Transverse colon (tissue), 4 donors: ENCODE measurements at regions of chr7 and their contacts with region 1.

Region 1: DNA sequence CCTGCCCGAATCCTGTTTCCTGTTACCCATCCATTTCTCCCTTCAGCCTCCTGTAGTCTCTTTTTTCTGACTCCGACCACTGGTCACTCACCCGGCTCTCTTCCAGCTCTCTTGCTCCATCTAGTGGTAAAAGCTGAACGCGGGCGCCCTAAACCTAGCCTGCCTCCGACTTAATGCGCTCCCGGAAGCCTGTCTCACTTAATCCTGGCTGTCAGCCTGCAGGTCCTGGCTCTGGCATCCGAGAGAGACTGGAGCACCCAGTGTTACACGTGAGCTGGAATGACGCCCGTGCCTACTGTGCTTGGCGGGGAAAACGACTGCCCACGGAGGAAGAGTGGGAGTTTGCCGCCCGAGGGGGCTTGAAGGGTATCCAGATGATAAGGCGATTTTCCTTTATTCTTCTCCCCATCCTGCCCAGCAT is 10.3 kb downstream of the SUMF2 start:
- DNase-seq: peak; percentile 89
- H3K4me3 ChIP-seq: no peak overlapping the region
- H3K27ac ChIP-seq: peak overlapping the region in 2 of 4 donors; percentile 45 to 50
- H3K4me1 ChIP-seq: peaks cover 0 to 16% (median 4%) of the 10 kb centered on the region in 4 donors
- H3K27me3 ChIP-seq: no peaks in the 10 kb centered on the region
- CTCF ChIP-seq: peak; percentile 86 to 92 (median 92)
- EP300 ChIP-seq: no peak
- POLR2A ChIP-seq: no peak

Region 2: DNA sequence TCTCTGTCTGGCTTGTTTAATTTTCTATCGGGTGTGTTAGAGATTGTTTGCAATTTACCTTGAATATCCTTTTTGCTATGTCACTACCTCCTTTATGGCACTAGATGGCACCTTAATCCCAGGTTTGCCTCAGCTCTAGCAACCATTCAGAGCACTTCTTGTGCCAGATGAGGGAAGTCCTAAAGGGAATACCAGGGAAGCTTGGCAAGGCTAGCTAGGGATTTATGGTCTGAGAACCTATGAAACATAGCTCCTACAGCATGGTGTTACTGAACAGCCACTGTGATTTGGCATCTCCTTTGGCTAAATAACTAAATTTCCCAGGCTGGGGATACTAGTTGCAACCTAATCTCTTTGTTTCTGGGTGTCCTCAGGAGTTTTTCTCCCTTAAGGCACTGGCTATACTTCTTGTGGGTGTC is 433.1 kb before region 1 on chr7:
- in situ Hi-C with region 1: loop called in 1 of 4 experiments (anchors 10 kb)
- intact Hi-C with region 1: no loop called
- DNase-seq: peak; percentile 33
- H3K4me3 ChIP-seq: no peak overlapping the region
- H3K27ac ChIP-seq: no peak overlapping the region
- H3K4me1 ChIP-seq: peaks cover 0 to 5% (median 0%) of the 10 kb centered on the region in 4 donors
- H3K27me3 ChIP-seq: no peaks in the 10 kb centered on the region
- CTCF ChIP-seq: peak; percentile 70 to 85 (median 74)
- EP300 ChIP-seq: no peak
- POLR2A ChIP-seq: no peak

Region 3: DNA sequence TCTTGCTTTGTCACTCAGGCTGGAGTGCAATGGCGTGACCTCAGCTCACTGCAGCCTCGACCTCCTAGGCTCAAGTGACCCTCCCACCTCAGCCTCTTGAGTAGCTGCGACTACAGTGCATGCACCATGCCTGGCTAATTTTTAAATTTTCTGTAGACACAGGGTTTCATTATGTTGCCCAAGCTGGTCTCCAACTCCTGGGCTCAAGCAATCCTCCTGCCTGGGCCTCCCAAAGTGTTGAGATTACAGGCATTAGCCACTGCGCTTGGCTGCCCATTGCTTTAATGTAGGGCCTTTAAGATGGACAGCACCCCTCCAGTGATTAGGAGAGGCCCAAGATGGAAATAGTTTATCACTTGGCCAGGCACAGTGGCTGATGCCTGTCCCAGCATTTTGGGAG is 70.6 kb before region 1 on chr7:
- in situ Hi-C with region 1: loop called (anchors 5 to 10 kb)
- intact Hi-C with region 1: loop called (anchors 1 kb)
- DNase-seq: no peak
- H3K4me3 ChIP-seq: no peak overlapping the region
- H3K27ac ChIP-seq: no peak overlapping the region
- H3K4me1 ChIP-seq: no peaks in the 10 kb centered on the region
- H3K27me3 ChIP-seq: no peaks in the 10 kb centered on the region
- CTCF ChIP-seq: no peak
- EP300 ChIP-seq: no peak
- POLR2A ChIP-seq: no peak

Region 4: DNA sequence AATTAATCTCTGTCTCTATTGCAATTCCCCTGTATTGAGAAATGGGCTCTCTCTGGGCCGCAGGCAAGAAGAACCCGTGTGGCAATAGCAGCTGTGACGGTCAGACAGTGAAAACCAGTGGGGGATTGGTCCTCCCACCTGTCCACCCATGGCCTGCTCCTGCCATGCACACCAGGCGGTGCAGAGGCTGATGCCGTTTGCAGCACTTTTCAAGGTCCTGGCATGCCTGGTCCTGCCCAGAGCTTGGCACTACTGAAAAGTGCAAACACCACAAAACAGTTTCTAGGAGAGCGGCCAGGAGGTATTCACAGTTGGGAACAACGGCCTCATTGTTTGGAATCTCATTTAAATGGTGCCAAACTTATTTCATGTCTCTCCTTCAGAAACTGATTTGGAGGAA is 64.7 kb before region 1 on chr7:
- in situ Hi-C with region 1: loop called (anchors 5 to 10 kb)
- intact Hi-C with region 1: loop called (anchors 1 kb)
- DNase-seq: peak; percentile 47
- H3K4me3 ChIP-seq: no peak overlapping the region
- H3K27ac ChIP-seq: peak overlapping the region in 3 of 4 donors; percentile 29 to 49 (median 42)
- H3K4me1 ChIP-seq: peaks cover 0 to 10% (median 3%) of the 10 kb centered on the region in 4 donors
- H3K27me3 ChIP-seq: no peaks in the 10 kb centered on the region
- CTCF ChIP-seq: no peak
- EP300 ChIP-seq: no peak
- POLR2A ChIP-seq: no peak

Region 5: DNA sequence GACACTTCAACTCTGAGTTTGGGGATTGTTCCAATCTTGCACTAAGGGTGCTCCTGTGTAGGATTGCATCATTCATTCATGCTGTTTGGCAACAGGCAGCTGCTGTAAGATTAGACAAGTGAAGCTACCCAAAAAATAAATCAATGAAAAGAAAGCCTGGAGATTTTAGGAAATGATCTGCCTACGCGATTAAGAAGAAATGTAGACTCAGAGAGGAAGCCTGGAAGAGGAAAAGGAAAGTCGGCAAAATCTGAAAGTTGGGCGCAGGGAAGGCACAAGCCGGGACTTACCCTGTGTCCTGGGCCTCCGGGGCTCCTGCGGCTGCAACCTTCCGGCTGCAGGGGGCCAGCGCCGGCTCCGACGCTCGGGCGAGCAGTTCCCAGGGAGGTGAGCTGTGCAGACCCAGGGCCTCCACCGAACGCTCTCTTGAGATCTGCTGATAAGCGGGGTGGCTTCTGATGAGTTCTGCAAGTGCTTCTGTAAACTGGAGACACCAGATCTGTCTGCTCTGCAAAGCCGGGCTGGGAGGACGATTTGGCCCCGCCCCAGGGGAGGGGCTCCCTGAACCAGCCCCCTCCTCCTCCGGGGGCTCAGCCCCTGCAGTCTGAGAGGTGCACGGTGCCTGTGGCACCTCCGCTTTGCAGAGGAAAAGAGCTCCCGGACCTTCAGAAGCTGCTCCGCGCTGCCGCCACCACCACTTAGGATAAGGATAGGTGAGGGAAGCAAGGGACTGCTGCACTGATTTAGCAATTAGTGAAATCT is 40.5 kb before region 1 on chr7:
- in situ Hi-C with region 1: no loop called
- intact Hi-C with region 1: no loop called
- DNase-seq: peak; percentile 70
- H3K4me3 ChIP-seq: peak overlapping the region; percentile 39 to 75 (median 70)
- H3K27ac ChIP-seq: peak overlapping the region; percentile 73 to 86 (median 80)
- H3K4me1 ChIP-seq: peaks cover 0 to 14% (median 8%) of the 10 kb centered on the region in 4 donors
- H3K27me3 ChIP-seq: no peaks in the 10 kb centered on the region
- CTCF ChIP-seq: peak in 4 of 5 experiments; percentile 27 to 42 (median 35)
- EP300 ChIP-seq: no peak
- POLR2A ChIP-seq: no peak